AG04450 (cell line): ENCODE measurements at regions of chr3 and their contacts with region 1.

Region 1: GRCh38 chr3:16124636-16125035 is 49.8 kb upstream of the GALNT15 start:
- DNase-seq: peak; percentile 97
- H3K4me3 ChIP-seq: no peak overlapping the region
- H3K27ac ChIP-seq: peak overlapping the region; percentile 96
- H3K27me3 ChIP-seq: no peaks in the 10 kb centered on the region
- CTCF ChIP-seq: no peak

Region 2: DNA sequence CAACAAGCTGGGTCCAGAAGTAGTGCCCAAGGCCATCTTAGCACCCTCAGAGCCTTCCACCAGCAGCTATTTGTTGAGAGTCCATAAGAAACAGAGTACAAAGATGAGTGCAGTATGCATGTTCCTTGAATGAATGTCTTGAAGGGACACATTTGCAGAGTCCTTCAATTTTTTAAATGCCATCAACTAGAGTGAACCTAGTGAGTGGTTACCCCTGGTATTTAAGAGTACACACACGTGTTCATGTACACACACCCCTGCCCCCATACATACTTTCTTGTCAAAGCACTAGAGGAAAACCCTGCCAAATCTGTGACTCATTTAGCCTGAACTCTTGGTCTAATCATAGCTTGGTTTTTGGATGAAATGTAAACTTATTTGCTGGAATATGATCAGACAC is 34.6 kb before region 1 on chr3:
- CTCF ChIA-PET with region 1: no interaction called
- POLR2A ChIA-PET with region 1: interaction called, 10 read pairs
- DNase-seq: peak; percentile 95
- H3K4me3 ChIP-seq: no peak overlapping the region
- H3K27ac ChIP-seq: peak overlapping the region; percentile 75
- H3K27me3 ChIP-seq: no peaks in the 10 kb centered on the region
- CTCF ChIP-seq: no peak

Region 3: DNA sequence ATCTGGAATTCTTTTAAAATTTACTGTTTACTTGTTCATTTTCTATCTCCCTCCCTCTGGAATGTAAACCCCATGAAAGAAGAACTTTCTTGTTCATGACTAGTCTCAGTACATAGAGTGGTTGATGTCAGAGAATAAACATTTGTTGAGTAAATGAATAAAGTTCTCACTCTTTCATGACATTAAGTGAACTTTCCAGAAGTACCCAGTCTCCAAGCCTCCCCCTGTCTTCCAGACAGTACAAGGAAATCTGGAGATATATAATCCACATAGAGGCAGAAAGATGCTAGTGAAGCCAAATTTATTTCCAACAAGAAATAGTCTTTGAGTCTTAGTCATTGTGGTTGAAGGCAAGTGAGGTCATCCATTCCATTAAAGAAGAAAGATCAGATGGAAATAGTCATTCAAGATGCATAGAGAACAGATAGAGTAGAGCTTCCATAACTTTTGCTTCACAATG is 21.7 kb before region 1 on chr3:
- CTCF ChIA-PET with region 1: no interaction called
- POLR2A ChIA-PET with region 1: interaction called, 11 read pairs
- DNase-seq: peak; percentile 78
- H3K4me3 ChIP-seq: no peak overlapping the region
- H3K27ac ChIP-seq: peak overlapping the region; percentile 99
- H3K27me3 ChIP-seq: no peaks in the 10 kb centered on the region
- CTCF ChIP-seq: peak; percentile 33

Region 4: DNA sequence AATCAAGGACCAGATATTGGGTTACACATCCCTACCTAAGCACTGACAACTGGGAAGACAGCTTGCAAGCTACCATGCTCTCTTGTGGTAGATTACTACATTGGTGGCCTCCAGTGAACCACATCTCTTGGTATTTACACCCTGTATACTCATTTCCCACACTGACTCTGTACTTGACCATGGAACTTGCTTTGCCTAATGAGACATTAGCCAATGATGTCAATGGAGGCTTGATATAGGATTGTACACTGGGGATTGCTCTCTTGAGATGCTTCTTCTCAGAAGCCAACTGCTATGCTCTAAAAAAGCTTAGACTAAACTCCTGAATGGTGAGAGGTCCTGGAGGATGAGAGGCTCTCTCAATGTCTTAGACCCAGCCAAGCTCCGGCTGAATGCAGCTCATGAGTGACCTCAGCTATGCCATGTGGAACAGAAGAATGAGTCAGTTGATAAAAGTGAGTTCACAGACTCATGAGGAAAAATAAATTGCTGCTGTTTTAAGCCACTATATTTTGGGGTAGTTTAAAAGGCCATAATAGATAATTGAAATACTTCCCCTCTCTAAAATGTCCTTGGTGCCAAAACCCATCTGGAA is 11.6 kb before region 1 on chr3:
- CTCF ChIA-PET with region 1: no interaction called
- POLR2A ChIA-PET with region 1: no interaction called
- DNase-seq: no peak
- H3K4me3 ChIP-seq: no peak overlapping the region
- H3K27ac ChIP-seq: peak overlapping the region; percentile 63
- H3K27me3 ChIP-seq: no peaks in the 10 kb centered on the region
- CTCF ChIP-seq: no peak